B cell (primary cell): ENCODE measurements at regions of chr7 and their contacts with region 1.

Region 1: DNA sequence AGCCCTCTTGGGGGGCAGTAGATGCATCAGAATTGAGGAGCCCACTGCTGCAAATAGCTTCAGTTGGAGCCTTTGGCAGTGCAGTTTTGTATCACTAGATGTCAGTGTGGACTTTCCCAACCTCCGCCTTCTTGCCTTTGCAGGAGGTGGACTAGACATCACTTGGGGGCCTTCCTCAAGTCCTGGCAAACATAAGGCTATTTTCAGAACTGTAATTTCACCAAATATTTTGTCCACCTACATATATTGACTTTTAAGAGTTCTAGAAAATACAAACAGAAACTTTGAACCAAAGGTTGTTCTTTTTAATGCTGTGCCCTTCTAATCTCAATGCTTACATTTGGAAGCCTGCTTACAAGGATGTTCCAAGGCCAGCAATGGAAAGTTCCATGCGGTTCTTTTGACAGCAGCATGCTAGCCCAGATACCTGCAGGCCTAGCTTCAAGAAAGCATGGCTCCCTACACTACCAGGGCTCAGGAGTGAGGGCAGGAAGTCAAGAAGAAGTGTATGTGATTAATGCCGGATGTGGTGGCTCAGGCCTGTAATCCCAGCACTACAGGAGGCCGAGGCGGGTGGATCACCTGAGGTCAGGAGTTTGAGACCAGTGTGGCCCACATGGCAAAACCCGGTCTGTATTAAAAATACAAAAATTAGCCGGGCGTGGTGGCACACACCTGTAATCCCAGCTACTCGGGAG is 8.0 kb upstream of the ZNRF2 start:
- DNase-seq: peak; percentile 66
- ATAC-seq: peak; percentile 72
- H3K4me3 ChIP-seq: no peak overlapping the region
- H3K4me3 Mint-ChIP-seq: no peak overlapping the region
- H3K27ac ChIP-seq: no peak overlapping the region
- H3K27ac Mint-ChIP-seq: no peak overlapping the region
- H3K4me1 ChIP-seq: peaks cover 8 to 9% of the 10 kb centered on the region in 2 donors
- H3K4me1 Mint-ChIP-seq: peaks cover 16% of the 10 kb centered on the region
- H3K27me3 ChIP-seq: no peaks in the 10 kb centered on the region
- H3K27me3 Mint-ChIP-seq: no peaks in the 10 kb centered on the region
- CTCF ChIP-seq: peak; percentile 70

Region 2: DNA sequence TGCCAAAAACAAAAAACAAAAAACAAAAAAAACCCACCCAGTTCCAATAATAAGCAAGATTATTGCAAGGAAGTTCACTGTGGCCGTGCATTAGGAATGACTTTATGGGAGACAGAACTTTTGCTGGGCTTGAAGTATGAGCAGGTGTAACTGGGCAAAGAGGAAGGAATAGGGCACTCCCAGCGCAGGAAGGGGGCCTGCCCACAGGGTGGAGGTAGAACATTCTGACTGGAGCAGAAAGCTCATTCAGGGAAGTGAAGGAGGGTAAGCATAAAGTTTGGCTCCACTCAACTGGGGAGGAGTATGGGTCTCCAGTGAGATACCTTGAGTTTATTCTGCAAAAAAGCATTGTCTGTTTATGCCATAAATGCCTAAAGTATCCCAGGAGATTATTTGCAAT is 512.1 kb before region 1 on chr7:
- CTCF ChIA-PET with region 1: no interaction called
- POLR2A ChIA-PET with region 1: no interaction called
- intact Hi-C with region 1: no loop called
- DNase-seq: no peak
- ATAC-seq: no peak
- H3K4me3 ChIP-seq: no peak overlapping the region
- H3K4me3 Mint-ChIP-seq: no peak overlapping the region
- H3K27ac ChIP-seq: no peak overlapping the region
- H3K27ac Mint-ChIP-seq: no peak overlapping the region
- H3K4me1 ChIP-seq: no peaks in the 10 kb centered on the region
- H3K4me1 Mint-ChIP-seq: no peaks in the 10 kb centered on the region
- H3K27me3 ChIP-seq: peaks cover 0 to 4% (median 2%) of the 10 kb centered on the region in 4 experiments
- H3K27me3 Mint-ChIP-seq: peaks cover 29% of the 10 kb centered on the region
- CTCF ChIP-seq: no peak

Region 3: DNA sequence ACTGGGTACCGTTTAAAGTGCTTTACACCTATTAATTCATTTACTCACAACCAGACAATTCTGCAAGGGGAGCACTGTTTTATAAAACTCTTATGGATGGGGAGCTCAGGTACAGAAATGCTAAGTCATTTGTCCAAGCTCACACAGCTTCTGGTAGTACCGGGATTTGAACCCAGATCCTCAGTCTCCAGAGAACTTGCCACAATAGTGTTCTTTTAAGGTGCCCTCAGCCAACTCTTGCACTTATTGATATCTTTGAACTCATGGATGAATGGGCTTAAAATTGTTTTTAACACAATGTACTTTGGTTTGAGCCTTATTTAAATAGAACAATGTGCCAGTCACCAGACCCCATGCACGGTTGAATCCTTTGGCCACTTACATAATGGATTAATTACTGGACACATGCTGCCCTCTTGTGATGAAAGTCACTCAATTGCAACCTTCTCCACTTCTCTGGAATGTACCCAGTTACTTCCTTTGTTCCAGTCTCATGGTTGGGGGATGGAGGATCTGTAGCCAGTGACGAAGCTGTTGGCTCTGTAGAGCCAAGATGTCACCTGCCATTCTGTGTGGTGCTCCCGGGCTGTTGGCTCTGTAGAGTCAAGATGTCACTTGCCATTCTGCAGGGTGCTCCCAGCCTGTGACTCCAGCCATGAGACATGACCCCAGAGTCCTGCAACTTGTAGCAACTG is 136.6 kb after region 1 on chr7:
- CTCF ChIA-PET with region 1: interaction called, 45 read pairs
- POLR2A ChIA-PET with region 1: interaction called, 7 read pairs
- intact Hi-C with region 1: loop called (anchors 10 kb)
- DNase-seq: peak; percentile 35
- ATAC-seq: no peak
- H3K4me3 ChIP-seq: no peak overlapping the region
- H3K4me3 Mint-ChIP-seq: no peak overlapping the region
- H3K27ac ChIP-seq: peak overlapping the region in 1 of 2 donors; percentile 2
- H3K27ac Mint-ChIP-seq: peak overlapping the region; percentile 26
- H3K4me1 ChIP-seq: peaks cover 26 to 32% of the 10 kb centered on the region in 2 donors
- H3K4me1 Mint-ChIP-seq: peaks cover 35% of the 10 kb centered on the region
- H3K27me3 ChIP-seq: no peaks in the 10 kb centered on the region
- H3K27me3 Mint-ChIP-seq: no peaks in the 10 kb centered on the region
- CTCF ChIP-seq: peak; percentile 6

Region 4: GRCh38 chr7:30445770-30446169 is 169.4 kb after region 1 on chr7:
- CTCF ChIA-PET with region 1: interaction called, 15 read pairs
- POLR2A ChIA-PET with region 1: no interaction called
- intact Hi-C with region 1: loop called (anchors 5 kb)
- DNase-seq: peak; percentile 91
- ATAC-seq: peak; percentile 100
- H3K4me3 ChIP-seq: no peak overlapping the region
- H3K4me3 Mint-ChIP-seq: no peak overlapping the region
- H3K27ac ChIP-seq: peak overlapping the region in 1 of 2 donors; percentile 64
- H3K27ac Mint-ChIP-seq: peak overlapping the region; percentile 75
- H3K4me1 ChIP-seq: peaks cover 12% of the 10 kb centered on the region in 2 donors
- H3K4me1 Mint-ChIP-seq: peaks cover 8% of the 10 kb centered on the region
- H3K27me3 ChIP-seq: no peaks in the 10 kb centered on the region
- H3K27me3 Mint-ChIP-seq: no peaks in the 10 kb centered on the region
- CTCF ChIP-seq: peak; percentile 71